ENCODE measurements at regions of chr14 and their contacts with region 1.

Region 1: GRCh38 chr14:72594099-72594901 is 299.6 kb downstream of the DPF3 start:
- DNase-seq: peak; percentile 63
- H3K4me3 Mint-ChIP-seq: peak overlapping the region; percentile 12
- H3K27ac Mint-ChIP-seq: peak overlapping the region; percentile 13
- H3K4me1 Mint-ChIP-seq: peaks cover 53% of the 10 kb centered on the region
- H3K27me3 Mint-ChIP-seq: peaks cover 21% of the 10 kb centered on the region

Region 2: GRCh38 chr14:72523424-72524294 is 70.6 kb before region 1 on chr14:
- CTCF ChIA-PET with region 1: no interaction called
- POLR2A ChIA-PET with region 1: no interaction called
- intact Hi-C with region 1: loop called (anchors 1 kb)
- DNase-seq: no peak
- H3K4me3 Mint-ChIP-seq: no peak overlapping the region
- H3K27ac Mint-ChIP-seq: no peak overlapping the region
- H3K4me1 Mint-ChIP-seq: peaks cover 50% of the 10 kb centered on the region
- H3K27me3 Mint-ChIP-seq: no peaks in the 10 kb centered on the region

Region 3: GRCh38 chr14:72535485-72535884 is 58.8 kb before region 1 on chr14:
- CTCF ChIA-PET with region 1: no interaction called
- POLR2A ChIA-PET with region 1: no interaction called
- intact Hi-C with region 1: loop called (anchors 5 kb)
- DNase-seq: no peak
- H3K4me3 Mint-ChIP-seq: no peak overlapping the region
- H3K27ac Mint-ChIP-seq: no peak overlapping the region
- H3K4me1 Mint-ChIP-seq: peaks cover 43% of the 10 kb centered on the region
- H3K27me3 Mint-ChIP-seq: no peaks in the 10 kb centered on the region

Region 4: GRCh38 chr14:72617391-72618031 is 23.2 kb after region 1 on chr14:
- CTCF ChIA-PET with region 1: no interaction called
- POLR2A ChIA-PET with region 1: no interaction called
- intact Hi-C with region 1: no loop called
- DNase-seq: no peak
- H3K4me3 Mint-ChIP-seq: no peak overlapping the region
- H3K27ac Mint-ChIP-seq: no peak overlapping the region
- H3K4me1 Mint-ChIP-seq: no peaks in the 10 kb centered on the region
- H3K27me3 Mint-ChIP-seq: no peaks in the 10 kb centered on the region

Region 5: DNA sequence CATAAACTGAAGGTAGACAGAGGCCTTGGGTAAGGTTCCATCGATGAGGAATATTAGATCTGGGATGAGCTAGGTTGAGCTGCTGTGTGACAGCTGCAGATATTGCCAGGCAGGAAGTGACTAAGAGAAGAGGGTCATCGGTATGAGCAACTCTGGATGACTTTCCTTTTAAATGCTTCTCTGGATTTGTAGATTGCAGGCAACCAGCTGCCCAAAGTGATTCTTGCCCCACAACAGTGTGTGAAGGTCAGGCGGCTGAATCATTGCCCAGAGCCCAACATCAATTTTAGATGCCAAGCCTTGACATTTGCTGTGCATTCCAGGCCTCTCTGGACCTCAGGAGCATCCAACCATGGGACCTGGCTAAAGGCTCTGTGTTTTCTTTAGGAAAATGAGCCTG is 43.7 kb after region 1 on chr14:
- CTCF ChIA-PET with region 1: no interaction called
- POLR2A ChIA-PET with region 1: no interaction called
- intact Hi-C with region 1: no loop called
- DNase-seq: no peak
- H3K4me3 Mint-ChIP-seq: no peak overlapping the region
- H3K27ac Mint-ChIP-seq: no peak overlapping the region
- H3K4me1 Mint-ChIP-seq: no peaks in the 10 kb centered on the region
- H3K27me3 Mint-ChIP-seq: peaks cover 1% of the 10 kb centered on the region

Region 6: GRCh38 chr14:72893636-72894321 is 299.5 kb after region 1 on chr14 and contains the start of gene DPF3:
- CTCF ChIA-PET with region 1: no interaction called
- POLR2A ChIA-PET with region 1: no interaction called
- intact Hi-C with region 1: loop called (anchors 5 kb)
- DNase-seq: peak; percentile 94
- H3K4me3 Mint-ChIP-seq: peak within 1 kb of the TSS; percentile 88
- H3K27ac Mint-ChIP-seq: peak within 1 kb of the TSS; percentile 40
- H3K4me1 Mint-ChIP-seq: peaks cover 20% of the 10 kb centered on the region
- H3K27me3 Mint-ChIP-seq: peaks cover 43% of the 10 kb centered on the region
- total RNA-seq, gene DPF3: 0.24 to 0.39 TPM

Measured in activated CD4-positive, alpha-beta memory T cell treated with anti-CD3 and anti-CD28 coated beads for 36 hours (primary cell).